MCF 10A (cell line): ENCODE measurements at regions of chr7 and their contacts with region 1.

Region 1: GRCh38 chr7:130941322-130942210 is 207.6 kb upstream of the KLF14 start:
- DNase-seq: peak; percentile 41
- H3K4me3 Mint-ChIP-seq: peak overlapping the region; percentile 76
- H3K27ac Mint-ChIP-seq: peak overlapping the region; percentile 90
- H3K4me1 Mint-ChIP-seq: peaks cover 70% of the 10 kb centered on the region
- H3K27me3 Mint-ChIP-seq: no peaks in the 10 kb centered on the region
- CTCF ChIP-seq: no peak

Region 2: GRCh38 chr7:130921391-130922180 is 20.0 kb before region 1 on chr7:
- CTCF ChIA-PET with region 1: interaction called, 9 read pairs
- POLR2A ChIA-PET with region 1: interaction called, 71 read pairs
- intact Hi-C with region 1: no loop called
- DNase-seq: no peak
- H3K4me3 Mint-ChIP-seq: no peak overlapping the region
- H3K27ac Mint-ChIP-seq: peak overlapping the region; percentile 42
- H3K4me1 Mint-ChIP-seq: peaks cover 53% of the 10 kb centered on the region
- H3K27me3 Mint-ChIP-seq: no peaks in the 10 kb centered on the region
- CTCF ChIP-seq: no peak

Region 3: GRCh38 chr7:130929896-130930659 is 11.5 kb before region 1 on chr7:
- CTCF ChIA-PET with region 1: interaction called, 6 read pairs
- POLR2A ChIA-PET with region 1: interaction called, 71 read pairs
- intact Hi-C with region 1: no loop called
- DNase-seq: no peak
- H3K4me3 Mint-ChIP-seq: no peak overlapping the region
- H3K27ac Mint-ChIP-seq: peak overlapping the region; percentile 79
- H3K4me1 Mint-ChIP-seq: peaks cover 33% of the 10 kb centered on the region
- H3K27me3 Mint-ChIP-seq: no peaks in the 10 kb centered on the region
- CTCF ChIP-seq: no peak

Region 4: DNA sequence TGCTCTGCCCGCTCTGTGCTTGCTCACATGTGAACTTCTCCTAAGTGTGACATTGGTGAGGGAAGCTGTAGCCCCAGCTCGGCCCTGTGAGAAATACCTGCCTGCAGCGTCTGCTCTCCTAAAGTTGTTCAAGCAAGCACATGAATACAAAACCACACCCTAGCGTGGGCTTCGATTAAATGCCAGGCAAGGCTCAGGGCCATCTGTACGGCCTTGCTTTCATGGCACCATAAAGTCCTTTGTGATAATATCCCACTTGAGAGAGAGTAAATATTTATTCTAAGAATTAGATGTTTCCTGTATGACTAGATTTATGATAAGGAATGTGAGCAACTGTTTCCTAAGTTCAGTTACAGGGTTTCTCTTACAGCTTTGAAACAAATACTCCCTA is 55.3 kb after region 1 on chr7:
- CTCF ChIA-PET with region 1: interaction called, 3 read pairs
- POLR2A ChIA-PET with region 1: interaction called, 28 read pairs
- intact Hi-C with region 1: no loop called
- DNase-seq: peak; percentile 73
- H3K4me3 Mint-ChIP-seq: peak overlapping the region; percentile 21
- H3K27ac Mint-ChIP-seq: peak overlapping the region; percentile 96
- H3K4me1 Mint-ChIP-seq: peaks cover 54% of the 10 kb centered on the region
- H3K27me3 Mint-ChIP-seq: no peaks in the 10 kb centered on the region
- CTCF ChIP-seq: no peak